ENCODE measurements at regions of chr6 and their contacts with region 1.

Region 1: GRCh38 chr6:106979427-106979884 is 4.9 kb upstream of the CD24 start:
- DNase-seq: peak; percentile 78
- CTCF ChIP-seq: peak; percentile 96

Region 2: GRCh38 chr6:106325336-106326178 is 653.9 kb before region 1 on chr6 and contains the start of gene ATG5:
- in situ Hi-C with region 1: loop called (anchors 25 kb)
- DNase-seq: peak; percentile 97
- CTCF ChIP-seq: peak; percentile 11

Region 3: DNA sequence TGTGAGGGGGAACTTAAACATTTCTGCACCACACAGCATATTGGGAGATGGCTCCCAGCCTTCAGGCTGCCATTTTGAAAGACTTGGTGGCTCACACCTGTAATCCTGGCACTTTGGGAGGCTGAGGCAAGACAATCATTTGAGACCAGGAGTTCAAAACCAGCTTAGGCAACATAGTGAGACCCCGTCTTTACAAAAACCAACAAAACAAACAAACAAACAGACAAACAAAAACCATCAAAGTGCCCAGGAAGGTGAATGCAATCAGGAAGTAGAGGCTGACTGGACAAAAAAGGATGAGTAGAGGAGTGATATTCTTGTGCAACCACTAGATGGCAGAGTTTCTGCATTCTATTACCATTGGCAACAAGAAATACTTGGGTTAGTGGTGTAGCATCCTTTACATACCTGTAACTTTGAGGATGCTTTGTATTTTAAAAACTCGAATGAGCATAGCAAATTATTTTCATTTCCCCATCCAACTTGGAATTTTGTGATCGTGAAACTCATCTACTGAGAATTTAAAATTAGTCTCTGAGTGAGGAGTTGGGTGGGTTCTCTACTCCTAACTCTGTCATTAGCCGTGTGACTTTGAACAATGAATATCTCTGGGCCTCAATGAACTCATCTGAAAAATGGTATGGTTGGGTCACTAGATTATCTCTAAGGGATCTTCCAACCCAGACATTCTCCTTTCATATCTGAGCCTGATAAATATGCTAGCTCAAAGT is 534.5 kb before region 1 on chr6:
- in situ Hi-C with region 1: loop called (anchors 25 kb)
- DNase-seq: peak; percentile 72
- CTCF ChIP-seq: peak; percentile 68

Region 4: GRCh38 chr6:106608062-106608668 is 371.3 kb before region 1 on chr6:
- in situ Hi-C with region 1: loop called (anchors 10 kb)
- DNase-seq: peak; percentile 45
- CTCF ChIP-seq: peak; percentile 65